Uterus (tissue), 4 donors: ENCODE measurements at regions of chr4 and their contacts with region 1.

Region 1: GRCh38 chr4:26857278-26858034 is 3.2 kb upstream of the STIM2 start:
- DNase-seq: peak; percentile 85 to 89
- H3K4me3 ChIP-seq: peak overlapping the region; percentile 55 to 56
- H3K27ac ChIP-seq: peak overlapping the region; percentile 85 to 87
- H3K4me1 ChIP-seq: peaks cover 0 to 9% of the 10 kb centered on the region in 2 donors
- H3K27me3 ChIP-seq: no peaks in the 10 kb centered on the region
- CTCF ChIP-seq: peak in 3 of 4 experiments; percentile 13 to 50 (median 14)
- POLR2A ChIP-seq: peak; percentile 65 to 74

Region 2: DNA sequence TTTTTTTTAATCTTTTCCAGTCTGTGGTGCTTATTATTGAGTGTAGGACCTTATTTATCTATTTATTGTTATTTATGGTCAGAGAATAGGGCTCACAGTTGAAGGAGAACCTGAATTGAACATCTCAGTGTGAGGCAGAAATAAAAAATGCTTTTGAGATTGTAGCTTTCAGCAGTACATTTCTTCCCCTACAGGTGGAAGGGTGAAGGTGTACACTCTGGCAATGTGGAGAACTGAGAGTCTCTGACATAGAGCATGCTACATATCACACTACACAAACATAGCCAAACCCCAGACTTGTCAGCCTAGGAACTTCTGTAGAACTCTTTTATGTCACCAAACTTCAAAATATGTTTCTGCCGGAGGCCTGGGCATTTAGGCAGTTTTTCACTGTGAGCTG is 143.4 kb after region 1 on chr4:
- intact Hi-C with region 1: loop called (anchors 10 kb)
- DNase-seq: no peak
- H3K4me3 ChIP-seq: no peak overlapping the region
- H3K27ac ChIP-seq: no peak overlapping the region
- H3K4me1 ChIP-seq: peaks cover 0 to 3% of the 10 kb centered on the region in 2 donors
- H3K27me3 ChIP-seq: no peaks in the 10 kb centered on the region
- CTCF ChIP-seq: peak in 1 of 4 experiments; percentile 12
- POLR2A ChIP-seq: no peak